Mucosa of descending colon (tissue), 3 donors: ENCODE measurements at regions of chr2 and their contacts with region 1.

Region 1: GRCh38 chr2:119407430-119408220 is 24.0 kb upstream of the TMEM37 start:
- DNase-seq: peak in 1 of 3 donors; percentile 72
- ATAC-seq: peak; percentile 80
- H3K4me3 ChIP-seq: no peak overlapping the region
- H3K4me1 ChIP-seq: peaks cover 8% of the 10 kb centered on the region
- CTCF ChIP-seq: peak; percentile 55

Region 2: DNA sequence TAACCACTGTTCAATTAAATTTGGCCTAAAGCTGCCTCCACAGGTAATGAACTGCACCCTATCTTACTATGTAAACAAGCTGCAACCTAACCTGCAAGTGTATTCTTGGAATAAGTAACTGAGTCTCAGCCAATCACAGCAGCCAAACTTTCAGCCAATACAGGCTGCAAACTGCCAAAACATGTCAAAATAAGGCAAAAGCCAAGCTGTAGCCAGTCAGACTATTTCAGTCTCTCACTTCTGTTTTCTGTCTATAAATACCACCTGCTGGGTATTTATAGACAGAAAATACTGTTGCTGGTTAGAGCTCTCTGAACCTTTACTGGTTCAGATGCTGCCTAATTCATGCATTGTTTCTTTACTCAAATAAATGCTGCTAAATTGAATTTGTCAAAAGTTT is 55.3 kb before region 1 on chr2:
- intact Hi-C with region 1: no loop called
- DNase-seq: no peak
- ATAC-seq: peak; percentile 66
- H3K4me3 ChIP-seq: no peak overlapping the region
- H3K4me1 ChIP-seq: no peaks in the 10 kb centered on the region
- CTCF ChIP-seq: peak; percentile 9

Region 3: DNA sequence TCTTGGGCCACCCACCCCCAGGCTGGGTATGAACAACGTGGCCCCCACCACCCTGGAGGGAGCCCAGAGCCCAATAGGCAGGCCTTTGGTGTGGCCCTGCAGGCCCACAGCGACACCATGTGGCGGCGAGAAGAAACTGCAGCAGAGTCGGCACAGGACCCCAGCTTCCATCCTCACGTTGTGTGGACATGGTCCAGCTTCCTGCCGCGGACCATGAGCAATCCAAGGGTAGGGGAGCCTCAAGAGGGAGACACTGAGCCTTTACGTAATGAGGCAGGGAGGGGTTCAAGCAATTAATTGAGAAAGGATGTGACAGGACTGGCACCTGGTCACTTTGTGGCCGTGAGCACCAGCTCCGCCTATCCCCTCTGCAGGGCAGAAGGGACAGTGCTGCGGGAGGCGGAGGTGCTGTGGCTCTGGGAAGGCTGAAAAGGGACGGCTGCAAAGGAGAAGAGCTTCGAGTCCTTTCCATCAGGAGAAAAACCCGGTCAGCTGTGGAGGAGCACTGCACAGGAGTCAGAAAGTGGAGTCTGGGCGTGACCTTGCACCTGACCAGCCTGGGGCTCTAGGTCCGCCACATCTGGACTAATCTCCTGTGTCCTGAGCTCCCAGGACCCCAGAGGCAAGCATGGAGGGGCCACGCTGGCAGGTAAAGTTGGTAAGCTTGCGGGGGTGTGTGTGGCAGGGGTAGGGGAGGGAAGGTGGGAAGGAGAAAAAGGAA is 68.8 kb after region 1 on chr2:
- intact Hi-C with region 1: loop called (anchors 5 kb)
- DNase-seq: peak in 2 of 3 donors; percentile 56 to 72
- ATAC-seq: peak; percentile 89
- H3K4me3 ChIP-seq: no peak overlapping the region
- H3K4me1 ChIP-seq: peaks cover 3% of the 10 kb centered on the region
- CTCF ChIP-seq: peak; percentile 93

Region 4: DNA sequence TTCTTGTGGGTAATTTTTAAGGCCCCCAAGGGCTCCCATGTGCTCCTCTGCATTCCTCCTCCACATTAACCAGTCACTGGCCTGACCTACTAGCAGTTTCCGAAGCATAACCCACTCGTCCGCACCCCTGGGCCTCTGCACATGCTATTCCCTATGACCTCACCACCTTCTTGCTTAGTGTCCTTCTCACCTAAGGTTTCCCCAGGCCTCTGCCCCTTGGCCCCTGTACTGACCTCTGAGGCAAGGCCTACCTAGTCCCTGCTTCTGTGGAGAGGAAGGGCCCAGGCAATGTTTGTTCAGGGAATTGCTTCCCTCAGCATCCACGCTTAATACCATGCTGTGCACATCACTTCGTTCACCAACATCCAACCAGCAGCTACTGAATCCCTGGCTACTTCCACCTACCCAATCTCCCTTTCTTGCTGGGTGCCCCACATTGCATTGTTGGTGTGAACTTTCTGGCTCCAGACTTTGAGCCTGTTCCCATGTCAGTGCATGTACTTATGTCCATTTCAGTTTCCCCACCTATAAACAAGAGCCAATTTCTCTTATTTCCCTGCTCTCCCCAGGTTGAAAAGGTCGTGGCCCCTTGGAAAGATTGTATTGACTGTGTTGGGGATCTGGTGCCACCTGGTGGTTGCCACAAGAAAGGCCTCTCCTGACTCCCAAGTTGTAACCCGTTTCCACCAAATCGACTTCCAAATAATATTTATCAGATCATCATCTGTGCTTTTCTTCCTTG is 252.1 kb after region 1 on chr2:
- intact Hi-C with region 1: loop called in 1 of 2 experiments (anchors 10 kb)
- DNase-seq: peak in 2 of 3 donors; percentile 39 to 61
- ATAC-seq: peak; percentile 62
- H3K4me3 ChIP-seq: no peak overlapping the region
- H3K4me1 ChIP-seq: no peaks in the 10 kb centered on the region
- CTCF ChIP-seq: peak; percentile 84

Region 5: GRCh38 chr2:119879502-119879901 is 471.9 kb after region 1 on chr2:
- intact Hi-C with region 1: no loop called
- DNase-seq: no peak
- ATAC-seq: no peak
- H3K4me3 ChIP-seq: no peak overlapping the region
- H3K4me1 ChIP-seq: no peaks in the 10 kb centered on the region
- CTCF ChIP-seq: no peak